WTC11 (cell line): ENCODE measurements at regions of chr1 and their contacts with region 1.

Region 1: GRCh38 chr1:176225911-176226310 is 18.8 kb upstream of the COP1 start:
- DNase-seq: no peak
- ATAC-seq: no peak
- H3K4me3 Mint-ChIP-seq: no peak overlapping the region
- H3K27ac Mint-ChIP-seq: no peak overlapping the region
- H3K4me1 Mint-ChIP-seq: peaks cover 29% of the 10 kb centered on the region
- H3K27me3 Mint-ChIP-seq: no peaks in the 10 kb centered on the region
- CTCF ChIP-seq: no peak

Region 2: GRCh38 chr1:176206961-176207902 is 18.7 kb before region 1 on chr1 and contains the start of gene COP1:
- CTCF ChIA-PET with region 1: interaction called, 6 read pairs
- POLR2A ChIA-PET with region 1: interaction called, 11 read pairs
- DNase-seq: peak; percentile 97
- ATAC-seq: peak; percentile 90
- H3K4me3 Mint-ChIP-seq: peak within 1 kb of the TSS; percentile 95
- H3K27ac Mint-ChIP-seq: peak within 1 kb of the TSS; percentile 98
- H3K4me1 Mint-ChIP-seq: peaks cover 34% of the 10 kb centered on the region
- H3K27me3 Mint-ChIP-seq: no peaks in the 10 kb centered on the region
- CTCF ChIP-seq: no peak
- total RNA-seq, gene COP1: 36.0 to 44.1 TPM (median 40.4 TPM) in 3 replicates